Activated naive CD4-positive, alpha-beta T cell treated with anti-CD3 and anti-CD28 coated beads, Interleukin-2, amount 10 ng/mL, durations not matched to agents 7 days and 5 days (primary cell): ENCODE measurements at regions of chr3 and their contacts with region 1.

Region 1: GRCh38 chr3:44529927-44530326 is 25.1 kb upstream of the ZKSCAN7 start:
- DNase-seq: peak; percentile 51
- H3K4me3 Mint-ChIP-seq: no peak overlapping the region
- H3K27ac Mint-ChIP-seq: no peak overlapping the region
- H3K4me1 Mint-ChIP-seq: no peaks in the 10 kb centered on the region
- H3K27me3 Mint-ChIP-seq: peaks cover 17% of the 10 kb centered on the region

Region 2: DNA sequence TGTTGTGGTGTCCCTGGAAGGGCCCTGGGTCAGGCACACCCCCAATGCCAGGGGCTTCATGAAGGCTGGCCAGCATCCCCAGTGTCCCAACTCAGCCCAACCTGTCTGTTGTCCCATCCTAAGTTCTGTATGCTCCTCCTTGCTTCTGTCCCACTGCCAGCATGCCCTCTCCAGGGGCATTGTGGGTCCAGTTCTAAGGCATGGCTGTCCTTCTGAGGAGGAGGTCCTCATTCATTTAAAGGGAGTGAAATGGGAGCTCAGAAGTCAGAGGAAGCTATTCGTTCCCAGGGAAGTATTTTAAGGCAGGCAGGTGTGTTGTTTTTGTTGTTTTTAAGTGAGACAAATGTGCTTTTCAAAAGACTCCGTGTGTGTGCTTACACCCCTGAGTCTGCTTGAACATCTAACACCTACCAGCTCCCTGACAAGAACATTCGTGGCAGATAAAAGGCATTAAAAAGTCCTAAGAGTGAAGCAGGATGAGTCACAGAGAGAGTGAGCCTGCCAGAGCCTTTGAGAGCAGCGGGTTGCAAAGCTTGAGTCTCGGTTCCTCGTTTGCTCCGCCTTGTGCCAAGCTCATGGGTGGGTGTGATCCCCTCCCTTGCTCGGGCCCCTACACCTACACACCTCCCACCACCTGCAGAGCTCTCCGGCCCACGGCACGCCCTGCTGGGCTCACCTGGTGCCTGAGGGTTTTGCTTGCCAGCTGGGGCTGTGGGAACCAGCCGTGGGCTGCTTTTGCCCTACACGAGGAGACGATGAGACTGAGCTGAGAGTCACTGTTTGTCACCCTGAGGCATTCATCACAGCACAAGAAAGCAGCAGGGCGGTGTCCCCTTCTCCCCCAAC is 471.7 kb before region 1 on chr3:
- CTCF ChIA-PET with region 1: no interaction called
- DNase-seq: peak; percentile 33
- H3K4me3 Mint-ChIP-seq: no peak overlapping the region
- H3K27ac Mint-ChIP-seq: no peak overlapping the region
- H3K4me1 Mint-ChIP-seq: peaks cover 24% of the 10 kb centered on the region
- H3K27me3 Mint-ChIP-seq: peaks cover 45% of the 10 kb centered on the region

Region 3: GRCh38 chr3:44913868-44914468 is 384.0 kb after region 1 on chr3:
- CTCF ChIA-PET with region 1: interaction called, 25 read pairs
- DNase-seq: peak; percentile 76
- H3K4me3 Mint-ChIP-seq: no peak overlapping the region
- H3K27ac Mint-ChIP-seq: no peak overlapping the region
- H3K4me1 Mint-ChIP-seq: no peaks in the 10 kb centered on the region
- H3K27me3 Mint-ChIP-seq: peaks cover 11% of the 10 kb centered on the region

Region 4: GRCh38 chr3:44942202-44942921 is 412.4 kb after region 1 on chr3:
- CTCF ChIA-PET with region 1: no interaction called
- DNase-seq: no peak
- H3K4me3 Mint-ChIP-seq: no peak overlapping the region
- H3K27ac Mint-ChIP-seq: no peak overlapping the region
- H3K4me1 Mint-ChIP-seq: no peaks in the 10 kb centered on the region
- H3K27me3 Mint-ChIP-seq: no peaks in the 10 kb centered on the region